Stomach (tissue), 19 donors: ENCODE measurements at regions of chr5 and their contacts with region 1.

Region 1: DNA sequence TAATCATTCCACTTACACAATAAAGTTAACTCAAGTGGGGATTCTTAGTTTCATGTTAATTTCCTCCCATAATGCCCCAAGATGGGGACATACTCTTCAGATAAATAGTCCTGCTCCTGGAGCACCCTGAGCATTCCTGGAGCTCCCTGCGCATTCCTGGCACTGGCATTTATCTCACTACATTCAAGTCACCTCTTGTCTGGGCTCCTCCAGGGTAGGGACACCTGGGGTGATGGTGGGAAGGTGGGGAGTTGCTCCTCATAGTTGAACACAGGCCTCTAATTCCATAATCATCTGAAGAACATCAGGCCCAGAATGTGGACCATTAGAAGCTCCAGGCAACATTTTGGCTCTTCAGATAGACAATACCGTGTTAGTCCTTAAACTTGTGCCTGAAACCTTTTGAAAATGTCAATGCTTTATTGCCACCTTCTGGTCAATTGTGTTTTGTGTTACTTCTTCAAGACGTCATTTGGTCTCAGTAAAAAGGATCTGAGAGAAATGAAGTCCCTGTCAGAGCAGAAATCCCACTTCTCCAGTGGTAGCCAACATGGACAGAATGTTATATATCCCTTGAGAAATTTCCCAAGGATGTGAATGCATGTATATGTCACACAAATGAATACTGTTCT is 14.2 kb upstream of the AGGF1 start:
- DNase-seq: peak in 1 of 2 donors; percentile 74
- H3K4me3 ChIP-seq: no peak overlapping the region
- H3K27ac ChIP-seq: no peak overlapping the region
- H3K4me1 ChIP-seq: no peaks in the 10 kb centered on the region
- H3K27me3 ChIP-seq: peaks cover 0 to 7% (median 0%) of the 10 kb centered on the region in 3 donors
- CTCF ChIP-seq: peak in 1 of 7 experiments; percentile 8
- EP300 ChIP-seq: no peak
- POLR2A ChIP-seq: no peak

Region 2: GRCh38 chr5:76874088-76874581 is 141.9 kb before region 1 on chr5:
- intact Hi-C with region 1: loop called (anchors 10 kb)
- DNase-seq: no peak
- H3K4me3 ChIP-seq: no peak overlapping the region
- H3K27ac ChIP-seq: no peak overlapping the region
- H3K4me1 ChIP-seq: no peaks in the 10 kb centered on the region
- H3K27me3 ChIP-seq: no peaks in the 10 kb centered on the region
- CTCF ChIP-seq: no peak
- EP300 ChIP-seq: no peak
- POLR2A ChIP-seq: no peak

Region 3: GRCh38 chr5:77282337-77283027 is 266.4 kb after region 1 on chr5:
- intact Hi-C with region 1: no loop called
- DNase-seq: peak in 1 of 2 donors; percentile 27
- H3K4me3 ChIP-seq: no peak overlapping the region
- H3K27ac ChIP-seq: peak overlapping the region in 1 of 5 donors; percentile 42
- H3K4me1 ChIP-seq: peaks cover 0 to 13% (median 3%) of the 10 kb centered on the region in 4 donors
- H3K27me3 ChIP-seq: no peaks in the 10 kb centered on the region
- CTCF ChIP-seq: no peak
- EP300 ChIP-seq: no peak
- POLR2A ChIP-seq: no peak